Right lobe of liver (tissue), 6 donors: ENCODE measurements at regions of chr5 and their contacts with region 1.

Region 1: GRCh38 chr5:134140530-134141201 is 26.2 kb downstream of the TCF7 start:
- DNase-seq: peak; percentile 76 to 79 (median 77)
- ATAC-seq: peak; percentile 83 to 92 (median 86)
- H3K4me3 ChIP-seq: no peak overlapping the region
- H3K27ac ChIP-seq: no peak overlapping the region
- H3K4me1 ChIP-seq: no peaks in the 10 kb centered on the region
- H3K27me3 ChIP-seq: no peaks in the 10 kb centered on the region
- CTCF ChIP-seq: peak; percentile 71 to 86 (median 83)
- POLR2A ChIP-seq: no peak

Region 2: DNA sequence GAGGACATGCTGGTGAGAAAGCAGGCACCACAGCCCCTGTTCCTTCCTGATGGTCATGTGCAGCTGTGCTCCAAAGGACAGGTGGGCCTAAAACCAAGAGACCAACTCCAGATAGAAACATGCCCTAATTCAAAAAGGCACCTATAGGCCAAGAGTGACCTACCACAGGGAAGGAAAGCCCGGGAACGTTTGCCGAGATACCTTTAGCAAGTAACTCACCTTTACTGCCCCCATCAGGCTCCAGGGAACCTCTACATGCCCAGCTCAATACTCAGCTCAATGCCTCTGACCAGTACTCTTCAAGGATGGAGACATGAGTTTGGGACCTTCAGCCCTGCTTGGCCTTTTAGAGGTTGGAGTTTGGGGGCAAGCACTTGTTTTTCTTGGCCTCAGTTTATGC is 355.5 kb before region 1 on chr5:
- intact Hi-C with region 1: no loop called
- DNase-seq: no peak
- ATAC-seq: no peak
- H3K4me3 ChIP-seq: no peak overlapping the region
- H3K27ac ChIP-seq: no peak overlapping the region
- H3K4me1 ChIP-seq: peaks cover 0 to 8% (median 0%) of the 10 kb centered on the region in 4 donors
- H3K27me3 ChIP-seq: no peaks in the 10 kb centered on the region
- CTCF ChIP-seq: no peak
- POLR2A ChIP-seq: no peak

Region 3: DNA sequence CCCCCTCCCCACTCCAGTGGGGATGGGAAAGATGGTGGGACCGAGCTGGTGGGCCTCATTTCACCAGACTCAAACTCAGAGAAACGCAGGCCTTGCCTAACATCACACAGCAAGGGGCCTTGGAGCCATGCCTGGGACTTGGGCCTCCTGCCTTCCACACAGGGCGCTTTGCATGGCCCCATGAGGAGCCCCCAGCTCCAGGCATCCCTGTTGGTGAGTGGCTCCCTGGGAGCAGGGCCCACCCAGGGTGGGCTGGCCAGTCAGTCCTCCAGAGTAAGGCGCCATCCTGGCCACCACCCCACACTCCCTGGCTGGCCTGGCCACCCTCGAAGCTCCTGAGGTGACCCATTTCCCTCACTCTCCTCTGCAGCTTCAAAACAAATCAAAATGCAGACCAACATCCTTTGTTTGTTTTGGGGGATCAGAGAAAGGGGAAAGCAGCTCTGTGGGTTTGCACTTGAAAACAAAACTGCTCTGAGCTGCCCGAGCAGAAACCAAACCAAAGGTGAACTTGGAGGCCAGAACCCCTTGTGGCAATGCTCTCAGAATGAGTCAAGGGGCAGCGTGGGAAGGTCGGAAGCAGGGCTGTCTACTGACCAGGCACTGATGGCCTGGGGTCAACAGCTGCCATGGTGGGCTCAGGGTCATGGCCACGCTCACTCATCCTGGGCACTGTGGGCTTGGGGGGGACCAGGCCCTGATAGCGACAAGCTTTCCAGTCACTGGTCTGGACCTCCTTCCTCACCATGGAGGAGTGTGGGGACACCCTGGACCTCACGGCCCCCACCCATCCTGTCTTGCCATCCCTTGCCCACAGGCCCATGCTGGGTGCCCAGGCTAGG is 98.9 kb before region 1 on chr5:
- intact Hi-C with region 1: loop called (anchors 5 kb)
- DNase-seq: peak in 1 of 3 donors; percentile 22
- ATAC-seq: no peak
- H3K4me3 ChIP-seq: no peak overlapping the region
- H3K27ac ChIP-seq: no peak overlapping the region
- H3K4me1 ChIP-seq: peaks cover 0 to 5% (median 0%) of the 10 kb centered on the region in 4 donors
- H3K27me3 ChIP-seq: no peaks in the 10 kb centered on the region
- CTCF ChIP-seq: no peak
- POLR2A ChIP-seq: no peak